ENCODE measurements at regions of chr5 and their contacts with region 1.

Region 1: DNA sequence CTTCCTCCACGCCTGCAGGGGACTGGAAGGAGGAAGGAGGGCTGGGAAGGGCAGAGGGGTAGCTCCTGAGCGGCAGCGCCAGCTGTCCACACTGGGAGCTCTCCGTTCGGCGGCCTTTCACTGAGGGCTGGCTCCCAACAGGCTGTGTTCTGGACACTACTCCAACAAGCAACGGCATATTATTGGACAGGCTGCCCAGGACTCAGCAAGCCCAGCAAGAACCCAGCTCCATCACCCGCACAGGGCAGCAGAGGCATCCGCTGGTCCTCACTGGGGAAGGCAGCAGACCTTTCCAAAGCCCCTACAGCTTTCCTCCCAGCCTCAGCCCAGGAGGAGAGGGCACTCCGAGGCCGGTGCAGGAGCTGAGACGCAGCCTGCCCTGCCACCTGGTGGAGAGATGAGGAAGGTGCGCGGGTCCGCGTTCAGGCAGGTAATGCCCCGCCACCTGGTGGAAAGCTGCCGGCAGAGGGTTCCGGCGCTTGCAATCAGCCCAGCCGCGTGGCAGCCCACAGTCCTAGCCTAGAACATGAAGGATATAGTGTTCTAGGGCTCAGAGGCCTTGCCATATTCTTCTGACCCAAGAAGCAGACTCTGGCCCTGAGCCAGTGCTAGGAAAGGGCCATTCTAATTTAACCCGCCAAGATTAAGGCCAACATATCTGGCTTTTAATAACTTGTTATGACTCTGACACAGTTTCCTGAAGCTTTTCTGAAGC is 74.4 kb downstream of the NRG2 start:
- DNase-seq: peak; percentile 79 to 93 (median 86)
- ATAC-seq: peak; percentile 100
- H3K4me3 ChIP-seq: no peak overlapping the region
- H3K27ac ChIP-seq: no peak overlapping the region
- H3K4me1 ChIP-seq: peaks cover 0 to 6% of the 10 kb centered on the region in 2 donors
- H3K27me3 ChIP-seq: no peaks in the 10 kb centered on the region
- CTCF ChIP-seq: peak; percentile 96 to 98

Region 2: DNA sequence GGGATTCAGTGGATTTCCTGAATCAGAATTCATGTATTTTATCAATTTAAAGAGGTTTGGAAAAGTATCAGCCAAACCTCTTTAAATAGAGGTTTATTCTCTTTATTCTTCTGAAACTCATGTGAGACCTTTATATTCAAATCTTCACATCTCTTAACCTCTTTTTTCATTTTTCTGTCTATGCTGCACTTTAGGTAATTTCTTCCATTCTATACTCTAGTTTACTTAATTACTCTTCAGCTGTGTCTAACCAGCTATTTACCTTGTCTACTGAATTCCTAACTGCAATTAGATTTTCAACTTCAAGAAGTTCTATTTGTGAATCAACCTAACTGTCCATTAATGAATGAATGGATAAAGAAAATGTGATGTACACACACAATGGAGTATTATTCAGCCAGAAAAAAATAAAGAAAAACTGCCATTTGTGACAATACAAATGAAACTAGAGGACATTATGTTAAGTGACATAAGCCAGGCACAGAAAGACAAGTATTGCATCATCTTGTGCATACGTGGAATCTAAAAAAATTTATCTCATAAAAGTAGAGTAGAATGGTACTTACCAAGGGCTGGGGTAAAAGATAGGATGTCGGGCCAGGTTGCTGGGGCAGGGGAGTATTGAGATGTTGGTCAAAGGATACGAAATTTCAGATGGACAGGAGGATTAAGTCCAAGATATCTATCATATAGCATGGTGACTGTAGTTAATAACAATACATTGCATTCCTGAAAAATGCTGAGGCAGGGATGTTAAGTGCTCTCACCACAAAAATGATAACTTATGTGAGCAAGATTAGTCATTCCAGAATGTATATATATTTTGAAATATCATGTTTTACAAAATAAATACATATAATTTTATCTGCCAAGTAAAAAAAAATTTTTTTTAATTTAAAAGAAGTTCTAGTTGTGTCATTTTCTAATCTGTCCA is 964.1 kb before region 1 on chr5:
- intact Hi-C with region 1: no loop called
- DNase-seq: no peak
- ATAC-seq: no peak
- H3K4me3 ChIP-seq: no peak overlapping the region
- H3K27ac ChIP-seq: no peak overlapping the region
- H3K4me1 ChIP-seq: no peaks in the 10 kb centered on the region
- H3K27me3 ChIP-seq: no peaks in the 10 kb centered on the region
- CTCF ChIP-seq: no peak

Region 3: GRCh38 chr5:139698490-139699146 is 270.1 kb before region 1 on chr5:
- intact Hi-C with region 1: no loop called
- DNase-seq: peak; percentile 69 to 91 (median 80)
- ATAC-seq: peak; percentile 26
- H3K4me3 ChIP-seq: no peak overlapping the region
- H3K27ac ChIP-seq: peak overlapping the region in 1 of 2 donors; percentile 76
- H3K4me1 ChIP-seq: peaks cover 18 to 28% of the 10 kb centered on the region in 2 donors
- H3K27me3 ChIP-seq: peaks cover 0 to 61% of the 10 kb centered on the region in 2 donors
- CTCF ChIP-seq: no peak

Region 4: DNA sequence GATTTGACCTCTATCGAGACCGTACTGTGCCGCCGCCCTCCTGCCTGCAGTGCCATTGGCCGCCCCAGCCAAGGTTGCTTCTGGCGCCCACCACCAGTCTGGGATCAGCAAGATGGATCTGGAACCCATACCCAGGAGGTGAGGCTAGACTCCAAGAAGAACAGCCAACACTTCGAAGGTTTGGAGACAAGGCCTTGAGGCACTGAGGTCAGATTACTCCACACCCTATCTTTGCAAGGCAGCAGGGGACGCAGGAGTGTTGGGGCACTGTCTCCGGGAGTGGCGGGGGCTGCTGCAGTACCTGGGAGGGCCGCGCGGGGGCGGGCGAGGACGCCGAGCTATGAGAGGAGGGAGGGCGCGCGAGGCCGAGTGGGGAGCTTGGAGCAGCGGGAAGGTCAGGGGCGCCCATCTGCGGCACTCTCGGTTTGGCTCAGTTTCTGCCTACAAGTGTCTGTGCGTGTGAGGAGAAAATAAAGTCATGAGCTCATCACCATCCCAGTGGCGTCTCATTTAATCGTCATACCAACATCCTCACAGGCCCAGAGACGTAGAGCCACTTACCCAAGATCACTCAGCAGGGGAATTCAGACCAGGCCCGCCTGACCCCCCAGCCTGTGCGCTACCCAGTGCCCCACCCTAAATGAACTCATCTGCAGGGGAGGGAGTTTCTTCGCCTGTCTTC is 193.6 kb before region 1 on chr5:
- intact Hi-C with region 1: no loop called
- DNase-seq: peak in 3 of 4 donors; percentile 59 to 97 (median 63)
- ATAC-seq: peak; percentile 94
- H3K4me3 ChIP-seq: no peak overlapping the region
- H3K27ac ChIP-seq: no peak overlapping the region
- H3K4me1 ChIP-seq: peaks cover 0 to 12% of the 10 kb centered on the region in 2 donors
- H3K27me3 ChIP-seq: no peaks in the 10 kb centered on the region
- CTCF ChIP-seq: peak; percentile 91 to 94

Region 5: DNA sequence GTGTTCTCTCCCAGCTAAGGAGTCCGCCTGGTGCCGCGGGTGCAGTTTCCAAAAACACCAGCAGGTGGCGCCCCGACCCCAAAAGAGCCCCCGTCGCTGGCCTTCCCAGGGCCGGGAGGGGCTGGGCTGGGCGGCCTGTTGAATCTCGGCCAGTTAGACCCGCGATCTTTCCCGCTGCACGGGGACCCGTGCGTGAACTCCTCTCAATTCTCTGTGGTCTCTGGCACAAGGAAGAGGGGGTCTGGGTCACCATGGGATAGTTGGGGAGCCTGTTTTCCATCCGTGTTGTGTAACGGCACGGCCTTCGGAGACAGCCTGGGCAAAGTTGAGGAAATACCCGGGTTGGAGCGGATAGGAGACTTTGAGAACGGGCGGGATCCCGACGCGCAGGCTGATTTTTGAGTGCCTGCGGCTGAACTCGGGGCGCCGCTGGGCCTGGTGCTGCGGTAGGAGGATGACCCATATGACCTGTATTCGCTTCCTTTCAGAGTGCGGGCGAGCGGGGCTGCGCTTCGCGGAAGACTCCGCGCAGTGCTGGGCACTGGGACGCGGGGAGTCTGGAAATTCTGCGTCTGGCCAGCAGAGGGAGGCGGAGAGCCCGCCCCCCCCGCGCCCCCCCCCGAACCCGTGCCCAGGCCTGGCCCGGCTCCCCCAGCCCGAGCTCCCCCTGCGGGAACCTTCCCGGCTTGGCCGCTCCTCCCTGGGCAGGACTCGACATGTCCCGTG is 181.0 kb before region 1 on chr5:
- intact Hi-C with region 1: loop called in 1 of 2 experiments (anchors 5 kb)
- DNase-seq: peak; percentile 79 to 95 (median 84)
- ATAC-seq: peak; percentile 97
- H3K4me3 ChIP-seq: peak overlapping the region; percentile 42 to 52
- H3K27ac ChIP-seq: peak overlapping the region in 1 of 2 donors; percentile 18
- H3K4me1 ChIP-seq: peaks cover 0 to 13% of the 10 kb centered on the region in 2 donors
- H3K27me3 ChIP-seq: peaks cover 0 to 37% of the 10 kb centered on the region in 2 donors
- CTCF ChIP-seq: peak; percentile 88 to 95

Region 6: DNA sequence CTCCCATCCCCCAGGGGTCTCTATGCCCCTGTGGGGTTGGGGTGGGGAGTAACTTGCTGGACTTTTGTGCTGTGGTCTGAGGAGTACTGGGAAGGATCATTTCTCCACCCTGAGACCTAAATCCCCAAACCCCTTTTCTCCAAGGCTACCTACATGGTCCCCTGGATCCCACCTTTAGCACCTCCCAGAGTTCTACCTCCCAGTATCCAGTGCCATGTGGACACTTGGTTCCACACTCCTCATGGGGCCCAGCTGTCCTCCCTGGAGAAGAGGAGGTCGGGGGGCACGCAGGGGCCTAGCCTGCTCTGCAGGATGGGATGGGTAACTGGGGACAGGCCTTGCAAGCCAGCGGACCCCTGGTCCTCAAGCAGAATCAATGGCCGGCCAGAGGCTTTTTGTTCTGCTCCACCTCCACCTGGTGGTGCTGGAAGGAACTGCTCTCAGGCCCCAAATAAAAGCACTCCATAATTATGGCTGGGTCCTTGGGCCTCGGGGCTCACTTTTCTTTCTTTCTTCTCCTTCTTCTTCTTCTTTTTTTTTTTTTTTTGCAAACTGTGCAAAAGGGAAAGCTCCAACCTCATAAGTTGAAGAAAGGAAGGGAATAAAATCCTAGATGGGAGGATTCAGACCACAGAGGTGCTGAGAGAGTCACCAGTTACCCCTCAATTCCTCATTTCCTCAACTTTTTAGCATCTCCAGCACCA is 104.7 kb before region 1 on chr5:
- intact Hi-C with region 1: loop called in 1 of 2 experiments (anchors 10 kb)
- DNase-seq: peak in 2 of 4 donors; percentile 63 to 80
- ATAC-seq: peak; percentile 90
- H3K4me3 ChIP-seq: no peak overlapping the region
- H3K27ac ChIP-seq: peak overlapping the region in 1 of 2 donors; percentile 8
- H3K4me1 ChIP-seq: peaks cover 4 to 11% of the 10 kb centered on the region in 2 donors
- H3K27me3 ChIP-seq: no peaks in the 10 kb centered on the region
- CTCF ChIP-seq: peak; percentile 83 to 93

Region 7: GRCh38 chr5:140261403-140262171 is 292.9 kb after region 1 on chr5:
- intact Hi-C with region 1: no loop called
- DNase-seq: peak in 2 of 4 donors; percentile 32 to 83
- ATAC-seq: peak; percentile 95
- H3K4me3 ChIP-seq: no peak overlapping the region
- H3K27ac ChIP-seq: peak overlapping the region; percentile 70 to 74
- H3K4me1 ChIP-seq: peaks cover 9 to 32% of the 10 kb centered on the region in 2 donors
- H3K27me3 ChIP-seq: no peaks in the 10 kb centered on the region
- CTCF ChIP-seq: no peak